Activated naive CD4-positive, alpha-beta T cell treated with anti-CD3 and anti-CD28 coated beads for 36 hours (primary cell): ENCODE measurements at regions of chr9 and their contacts with region 1.

Region 1: GRCh38 chr9:22790329-22790728 is 343.7 kb downstream of the DMRTA1 start:
- DNase-seq: no peak
- H3K4me3 Mint-ChIP-seq: no peak overlapping the region
- H3K27ac Mint-ChIP-seq: no peak overlapping the region
- H3K4me1 Mint-ChIP-seq: no peaks in the 10 kb centered on the region
- H3K27me3 Mint-ChIP-seq: no peaks in the 10 kb centered on the region

Region 2: DNA sequence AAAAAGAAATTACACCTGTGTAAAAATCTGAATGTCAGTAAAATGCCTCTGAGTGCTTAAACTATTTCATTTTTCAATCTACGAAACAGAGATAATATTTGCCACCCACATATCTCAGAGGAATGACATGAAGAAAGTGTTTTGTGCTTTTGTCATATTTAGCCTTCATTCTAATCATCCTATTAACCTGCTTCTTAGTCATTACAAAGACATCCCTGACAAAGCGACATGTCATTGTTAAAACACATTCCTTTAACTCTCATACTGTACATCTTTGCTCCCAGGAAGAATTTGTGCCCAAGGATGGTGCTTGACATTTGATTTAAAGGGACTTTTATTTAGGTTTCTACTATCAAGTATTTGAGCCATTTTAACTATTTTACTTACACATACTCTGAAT is 67.8 kb before region 1 on chr9:
- CTCF ChIA-PET with region 1: no interaction called
- intact Hi-C with region 1: loop called (anchors 10 kb)
- DNase-seq: no peak
- H3K4me3 Mint-ChIP-seq: no peak overlapping the region
- H3K27ac Mint-ChIP-seq: no peak overlapping the region
- H3K4me1 Mint-ChIP-seq: no peaks in the 10 kb centered on the region
- H3K27me3 Mint-ChIP-seq: no peaks in the 10 kb centered on the region